ENCODE measurements at regions of chr6 and their contacts with region 1.

Region 1: DNA sequence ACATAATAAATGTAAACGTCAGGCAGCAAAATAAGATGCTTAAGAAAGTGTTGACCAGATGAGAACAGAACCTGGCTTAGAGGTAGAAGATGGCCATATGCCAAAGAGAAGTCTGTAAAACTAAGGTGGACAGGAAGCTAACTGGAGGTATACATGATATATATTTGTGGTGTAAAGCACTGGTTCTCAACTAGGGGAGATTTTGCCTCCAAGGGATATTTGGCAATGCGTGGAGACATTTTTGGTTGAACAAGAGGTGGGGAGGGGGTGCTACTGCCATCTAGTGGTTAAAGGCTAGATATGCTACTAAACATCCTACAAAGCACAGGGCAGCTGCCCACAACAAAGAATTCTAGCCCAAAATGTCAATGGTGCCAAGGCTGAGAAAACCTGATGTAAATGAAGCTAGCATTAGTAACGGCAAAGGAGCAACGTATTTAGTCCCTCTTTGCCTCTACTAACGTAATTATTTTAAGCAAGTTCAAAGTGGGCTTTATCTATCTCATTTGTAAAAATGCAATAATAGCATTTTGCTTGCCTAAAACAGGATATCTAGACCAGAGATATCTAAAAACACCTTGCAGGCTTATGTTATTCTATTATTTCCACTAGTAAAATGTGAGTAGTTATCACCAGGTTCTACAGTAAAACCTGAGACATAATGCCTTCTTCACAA is 182.6 kb downstream of the RNGTT start:
- DNase-seq: peak; percentile 31
- H3K4me3 Mint-ChIP-seq: no peak overlapping the region
- H3K27ac Mint-ChIP-seq: no peak overlapping the region
- H3K4me1 Mint-ChIP-seq: peaks cover 5% of the 10 kb centered on the region
- H3K27me3 Mint-ChIP-seq: no peaks in the 10 kb centered on the region

Region 2: GRCh38 chr6:87832025-87832825 is 948.6 kb before region 1 on chr6:
- intact Hi-C with region 1: loop called (anchors 10 kb)
- DNase-seq: no peak
- H3K4me3 Mint-ChIP-seq: peak overlapping the region; percentile 63
- H3K27ac Mint-ChIP-seq: no peak overlapping the region
- H3K4me1 Mint-ChIP-seq: peaks cover 14% of the 10 kb centered on the region
- H3K27me3 Mint-ChIP-seq: peaks cover 6% of the 10 kb centered on the region

Region 3: DNA sequence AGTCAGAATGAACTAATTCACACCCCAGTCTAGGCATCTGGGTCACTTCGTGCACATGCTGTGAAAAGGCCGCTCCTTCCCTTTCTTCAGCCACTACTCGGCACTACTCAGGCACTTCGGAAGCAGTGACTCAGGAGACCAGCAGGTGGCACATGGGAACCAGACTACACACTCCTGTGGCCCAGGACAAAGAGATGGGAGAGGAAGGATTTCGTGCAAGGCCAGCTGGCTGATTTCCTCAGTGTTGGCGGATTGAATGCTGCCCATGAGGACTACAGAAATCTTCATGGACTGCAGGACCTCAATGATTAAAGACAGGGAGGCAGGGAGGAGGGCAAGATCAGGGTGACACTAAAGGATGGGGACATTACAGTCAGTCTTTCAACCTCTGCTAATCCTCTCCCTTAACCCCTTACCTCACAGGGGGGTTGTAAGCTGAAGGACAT is 851.0 kb before region 1 on chr6:
- intact Hi-C with region 1: loop called (anchors 2 kb)
- DNase-seq: peak; percentile 28
- H3K4me3 Mint-ChIP-seq: no peak overlapping the region
- H3K27ac Mint-ChIP-seq: no peak overlapping the region
- H3K4me1 Mint-ChIP-seq: no peaks in the 10 kb centered on the region
- H3K27me3 Mint-ChIP-seq: peaks cover 9% of the 10 kb centered on the region

Region 4: DNA sequence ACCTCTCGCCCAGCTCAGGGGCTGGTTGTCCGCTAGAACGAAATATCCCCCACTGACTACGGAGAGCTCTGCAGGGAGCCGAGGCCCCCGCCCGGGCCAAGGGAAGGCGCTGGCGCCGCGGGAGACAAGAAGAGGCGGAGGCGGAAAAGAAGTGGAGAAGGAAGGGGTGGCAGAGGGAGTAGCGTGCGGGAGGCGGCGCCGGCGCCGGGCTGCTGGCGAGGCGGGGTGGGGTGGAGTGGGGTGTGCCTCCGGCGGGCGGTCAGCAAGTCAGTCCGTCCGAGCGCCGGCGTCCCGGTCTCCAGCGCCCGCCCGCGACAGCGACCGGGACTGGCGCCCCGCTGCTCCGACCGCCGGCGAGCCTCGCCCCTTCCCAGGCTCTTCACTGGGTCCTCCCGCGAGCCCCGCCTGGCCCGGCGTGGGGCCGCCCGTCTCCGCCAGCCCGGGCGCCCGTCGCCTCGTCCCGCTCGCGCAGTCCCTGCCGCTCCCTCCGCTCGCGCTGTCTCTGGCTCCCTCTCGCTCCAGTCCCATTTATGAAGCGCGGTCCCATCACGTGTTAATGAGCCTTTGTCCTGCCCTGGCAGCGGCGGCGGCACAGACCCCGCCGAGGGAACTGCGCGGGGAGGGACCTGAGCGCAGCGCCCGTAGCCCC is 614.9 kb before region 1 on chr6 and contains the start of gene CNR1:
- intact Hi-C with region 1: loop called (anchors 10 kb)
- DNase-seq: no peak
- H3K4me3 Mint-ChIP-seq: peak within 1 kb of the TSS; percentile 75
- H3K27ac Mint-ChIP-seq: no peak within 1 kb of the TSS
- H3K4me1 Mint-ChIP-seq: peaks cover 14% of the 10 kb centered on the region
- H3K27me3 Mint-ChIP-seq: peaks cover 70% of the 10 kb centered on the region
- total RNA-seq, gene CNR1: not detected in 2 replicates

Region 5: GRCh38 chr6:88538130-88538706 is 242.6 kb before region 1 on chr6:
- intact Hi-C with region 1: no loop called
- DNase-seq: no peak
- H3K4me3 Mint-ChIP-seq: no peak overlapping the region
- H3K27ac Mint-ChIP-seq: no peak overlapping the region
- H3K4me1 Mint-ChIP-seq: no peaks in the 10 kb centered on the region
- H3K27me3 Mint-ChIP-seq: no peaks in the 10 kb centered on the region